ENCODE measurements at regions of chr5 and their contacts with region 1.

Region 1: DNA sequence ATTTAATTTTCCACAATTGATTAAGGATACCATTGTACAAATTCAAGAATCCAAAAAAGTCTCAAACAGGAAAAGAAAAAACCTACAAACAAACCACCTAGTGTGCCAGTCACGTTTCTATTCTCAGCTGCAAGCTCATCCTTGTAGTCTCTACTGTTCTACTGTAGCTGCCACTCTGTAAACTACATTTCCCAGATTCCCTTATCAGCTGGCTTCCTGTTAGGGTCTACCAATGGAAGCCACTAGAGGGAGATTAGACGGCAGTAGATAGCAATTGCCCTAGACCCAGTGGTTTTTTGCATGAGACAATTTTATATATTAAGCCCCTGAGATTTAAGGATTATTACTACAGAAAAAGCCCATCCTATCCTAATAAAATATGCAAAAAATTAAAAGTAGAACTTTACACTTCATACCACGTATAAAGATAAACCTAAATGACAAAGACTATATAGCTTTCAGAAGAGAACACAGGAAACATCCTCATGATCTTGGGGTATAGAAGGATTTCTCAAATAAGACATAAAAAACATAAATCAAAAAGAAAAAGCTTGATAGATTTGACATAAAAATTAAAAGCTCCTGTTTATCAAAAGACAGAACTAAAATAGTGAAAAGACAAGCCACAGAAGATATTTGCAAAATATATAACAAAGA is 37.4 kb downstream of the P4HA2 start:
- DNase-seq: no peak
- ATAC-seq: peak; percentile 100
- H3K4me3 Mint-ChIP-seq: no peak overlapping the region
- H3K27ac Mint-ChIP-seq: no peak overlapping the region
- H3K4me1 Mint-ChIP-seq: no peaks in the 10 kb centered on the region
- H3K27me3 Mint-ChIP-seq: peaks cover 3% of the 10 kb centered on the region
- CTCF ChIP-seq: no peak

Region 2: DNA sequence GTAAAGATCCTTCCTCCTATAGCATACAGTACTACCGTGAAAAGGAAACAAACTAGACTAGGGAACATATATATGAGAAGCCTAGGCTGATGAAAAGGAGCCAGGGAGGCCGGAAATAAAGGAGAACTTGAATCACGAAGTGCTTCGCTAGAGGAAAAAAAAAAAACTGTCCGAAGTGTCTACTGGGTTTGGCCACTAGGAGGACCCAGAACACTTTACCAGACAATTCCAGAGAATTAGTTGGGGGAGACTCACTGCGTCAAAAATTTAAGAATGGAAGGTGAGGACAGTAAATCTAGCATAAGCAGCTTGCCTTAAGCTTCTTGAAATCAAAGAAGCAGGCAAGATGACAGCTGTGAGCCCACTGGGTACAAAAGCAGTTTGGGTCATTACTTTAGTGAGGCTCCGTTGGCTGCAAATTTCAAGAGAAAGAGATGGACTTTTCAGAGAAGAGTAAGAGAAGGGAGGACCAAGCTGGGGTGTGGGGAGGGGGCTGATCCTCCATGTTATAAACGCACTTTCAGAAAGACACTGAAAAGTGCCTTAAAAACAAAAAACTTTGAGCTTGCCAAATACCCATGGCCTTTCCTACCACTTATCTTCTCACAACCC is 10.0 kb before region 1 on chr5:
- CTCF ChIA-PET with region 1: interaction called, 7 read pairs
- POLR2A ChIA-PET with region 1: interaction called, 3 read pairs
- intact Hi-C with region 1: loop called (anchors 1 kb)
- DNase-seq: no peak
- ATAC-seq: peak; percentile 36
- H3K4me3 Mint-ChIP-seq: no peak overlapping the region
- H3K27ac Mint-ChIP-seq: no peak overlapping the region
- H3K4me1 Mint-ChIP-seq: peaks cover 24% of the 10 kb centered on the region
- H3K27me3 Mint-ChIP-seq: no peaks in the 10 kb centered on the region
- CTCF ChIP-seq: no peak

Region 3: DNA sequence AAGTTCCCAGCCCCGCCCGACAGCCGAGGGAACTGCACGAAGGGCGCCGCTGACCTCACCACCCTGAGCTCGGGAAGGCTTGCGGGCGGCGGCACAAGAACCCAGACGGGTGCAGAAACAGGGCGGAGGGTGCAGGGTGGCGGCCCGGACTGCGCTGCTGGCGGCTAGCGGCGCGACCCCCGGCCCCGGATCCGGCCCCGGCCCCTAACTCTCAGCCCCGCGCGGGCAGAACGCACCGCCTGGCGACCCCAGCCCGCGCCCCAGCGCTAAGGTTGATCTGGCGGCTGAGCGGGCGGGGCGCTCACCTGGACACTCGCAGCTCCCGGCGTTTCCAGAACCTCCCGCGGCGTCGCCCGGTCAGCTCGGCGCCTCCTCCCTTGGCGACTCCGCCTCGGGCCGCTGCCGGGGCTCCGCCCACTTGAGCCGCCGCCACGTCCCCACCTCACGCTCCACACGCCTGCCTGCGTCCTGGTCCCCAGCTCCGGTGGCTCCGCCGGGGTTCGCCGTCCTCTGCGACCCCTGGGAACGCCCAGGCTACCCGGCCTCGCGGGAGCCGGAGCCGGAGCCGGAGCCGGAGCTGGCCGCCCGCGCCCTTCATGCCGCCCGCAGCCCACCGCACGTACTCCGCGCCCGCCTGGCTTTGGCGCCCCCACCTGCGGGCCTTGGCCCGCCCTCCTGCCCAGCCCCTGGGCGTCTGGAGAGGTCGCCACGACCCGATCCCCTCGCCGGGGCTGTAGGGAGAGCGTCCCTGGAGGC is 37.4 kb after region 1 on chr5 and contains the start of gene P4HA2:
- CTCF ChIA-PET with region 1: no interaction called
- POLR2A ChIA-PET with region 1: no interaction called
- intact Hi-C with region 1: loop called (anchors 5 kb)
- DNase-seq: peak; percentile 60
- ATAC-seq: peak; percentile 83
- H3K4me3 Mint-ChIP-seq: peak within 1 kb of the TSS; percentile 65
- H3K27ac Mint-ChIP-seq: no peak within 1 kb of the TSS
- H3K4me1 Mint-ChIP-seq: peaks cover 31% of the 10 kb centered on the region
- H3K27me3 Mint-ChIP-seq: peaks cover 11% of the 10 kb centered on the region
- CTCF ChIP-seq: no peak
- total RNA-seq, gene P4HA2: 0.29 and 0.44 TPM in 2 replicates

Region 4: GRCh38 chr5:132238169-132238744 is 48.0 kb after region 1 on chr5:
- CTCF ChIA-PET with region 1: interaction called, 13 read pairs
- POLR2A ChIA-PET with region 1: no interaction called
- intact Hi-C with region 1: no loop called
- DNase-seq: peak; percentile 59
- ATAC-seq: peak; percentile 90
- H3K4me3 Mint-ChIP-seq: no peak overlapping the region
- H3K27ac Mint-ChIP-seq: no peak overlapping the region
- H3K4me1 Mint-ChIP-seq: no peaks in the 10 kb centered on the region
- H3K27me3 Mint-ChIP-seq: peaks cover 4% of the 10 kb centered on the region
- CTCF ChIP-seq: no peak

Region 5: DNA sequence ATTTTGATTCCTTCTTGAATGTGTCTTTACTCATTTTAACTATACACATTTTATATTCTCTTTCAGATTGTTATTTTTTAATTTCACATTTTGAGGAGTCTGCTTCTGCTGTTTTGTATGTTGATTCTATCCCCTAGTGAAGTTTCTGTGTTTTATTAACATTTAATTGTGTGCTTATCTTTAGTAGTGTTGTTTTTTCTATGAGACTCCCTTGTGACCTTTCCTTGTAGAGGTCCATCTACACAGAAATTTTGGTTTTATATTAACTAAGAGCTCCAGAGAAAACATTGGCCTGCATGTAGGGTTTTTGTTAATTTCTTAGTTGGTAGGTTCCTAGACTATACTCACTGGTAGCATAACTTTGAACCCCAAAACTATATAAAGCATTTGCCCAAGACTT is 432.3 kb after region 1 on chr5:
- CTCF ChIA-PET with region 1: no interaction called
- POLR2A ChIA-PET with region 1: no interaction called
- intact Hi-C with region 1: no loop called
- DNase-seq: no peak
- ATAC-seq: no peak
- H3K4me3 Mint-ChIP-seq: no peak overlapping the region
- H3K27ac Mint-ChIP-seq: no peak overlapping the region
- H3K4me1 Mint-ChIP-seq: no peaks in the 10 kb centered on the region
- H3K27me3 Mint-ChIP-seq: no peaks in the 10 kb centered on the region
- CTCF ChIP-seq: no peak

Measured in activated B cell treated with CpG ODN at 0.5 μM for 24 hours (primary cell).